Activated B cell treated with CpG ODN at 0.5 μM for 24 hours (primary cell): ENCODE measurements at regions of chr2 and their contacts with region 1.

Region 1: GRCh38 chr2:170905864-170906263 is 23.2 kb upstream of the GORASP2 start:
- DNase-seq: no peak
- ATAC-seq: no peak
- H3K4me3 Mint-ChIP-seq: no peak overlapping the region
- H3K27ac Mint-ChIP-seq: no peak overlapping the region
- H3K4me1 Mint-ChIP-seq: no peaks in the 10 kb centered on the region
- H3K27me3 Mint-ChIP-seq: peaks cover 9% of the 10 kb centered on the region
- CTCF ChIP-seq: no peak

Region 2: GRCh38 chr2:170895023-170895757 is 10.7 kb before region 1 on chr2:
- CTCF ChIA-PET with region 1: no interaction called
- POLR2A ChIA-PET with region 1: no interaction called
- intact Hi-C with region 1: no loop called
- DNase-seq: no peak
- ATAC-seq: no peak
- H3K4me3 Mint-ChIP-seq: no peak overlapping the region
- H3K27ac Mint-ChIP-seq: no peak overlapping the region
- H3K4me1 Mint-ChIP-seq: no peaks in the 10 kb centered on the region
- H3K27me3 Mint-ChIP-seq: peaks cover 15% of the 10 kb centered on the region
- CTCF ChIP-seq: no peak

Region 3: GRCh38 chr2:171394164-171394740 is 488.4 kb after region 1 on chr2:
- CTCF ChIA-PET with region 1: no interaction called
- POLR2A ChIA-PET with region 1: interaction called, 10 read pairs
- intact Hi-C with region 1: no loop called
- DNase-seq: no peak
- ATAC-seq: no peak
- H3K4me3 Mint-ChIP-seq: no peak overlapping the region
- H3K27ac Mint-ChIP-seq: no peak overlapping the region
- H3K4me1 Mint-ChIP-seq: peaks cover 27% of the 10 kb centered on the region
- H3K27me3 Mint-ChIP-seq: no peaks in the 10 kb centered on the region
- CTCF ChIP-seq: no peak